Activated naive CD4-positive, alpha-beta T cell treated with anti-CD3 and anti-CD28 coated beads for 36 hours (primary cell): ENCODE measurements at regions of chr9 and their contacts with region 1.

Region 1: DNA sequence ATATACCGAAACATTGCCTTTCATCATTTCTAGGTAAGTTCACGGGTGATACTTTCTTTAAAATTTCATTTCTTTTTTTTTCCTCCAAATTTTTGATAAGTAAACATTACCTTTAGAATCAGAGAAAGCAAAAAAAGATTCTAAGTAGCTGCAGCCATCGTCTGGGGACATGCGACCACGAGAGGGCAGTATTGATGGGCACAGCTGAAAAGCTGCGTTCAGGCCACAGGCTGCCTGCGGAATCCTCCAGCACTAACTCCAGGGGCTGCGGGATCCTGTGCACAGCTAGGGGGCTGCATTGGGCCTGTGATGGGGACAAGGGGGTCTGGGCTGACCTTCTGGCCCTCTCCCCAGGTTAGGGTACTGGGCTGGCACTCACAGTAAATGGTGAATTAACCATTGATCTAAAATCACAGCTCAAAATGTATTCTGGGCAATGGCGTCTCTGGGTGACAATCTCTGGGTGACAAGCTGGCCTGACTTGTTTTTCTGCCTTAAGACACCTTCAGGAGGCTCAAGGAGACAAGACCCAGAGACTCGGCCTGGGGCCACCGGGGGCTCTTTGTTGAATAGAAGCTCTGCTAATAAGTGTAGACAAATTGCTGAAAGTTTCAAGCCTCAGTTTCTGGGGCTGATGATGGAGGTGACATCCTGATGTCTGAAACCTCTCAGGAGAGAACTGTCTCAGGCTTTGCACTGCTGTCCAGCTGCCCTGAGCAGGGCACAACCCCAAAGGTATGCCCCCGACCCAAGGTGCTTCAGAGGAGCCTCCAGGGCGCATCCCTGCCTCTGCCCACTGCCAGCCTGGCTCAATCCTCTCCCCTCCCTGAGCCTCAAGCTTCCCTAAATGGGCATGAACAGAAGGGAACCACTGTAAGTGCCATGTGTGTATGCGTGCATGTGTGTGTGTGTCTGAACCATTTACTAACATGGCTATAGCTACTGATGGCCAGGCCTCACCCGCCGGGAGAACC is 44.3 kb upstream of the SARDH start:
- DNase-seq: peak; percentile 83
- H3K4me3 Mint-ChIP-seq: no peak overlapping the region
- H3K27ac Mint-ChIP-seq: no peak overlapping the region
- H3K4me1 Mint-ChIP-seq: no peaks in the 10 kb centered on the region
- H3K27me3 Mint-ChIP-seq: no peaks in the 10 kb centered on the region

Region 2: DNA sequence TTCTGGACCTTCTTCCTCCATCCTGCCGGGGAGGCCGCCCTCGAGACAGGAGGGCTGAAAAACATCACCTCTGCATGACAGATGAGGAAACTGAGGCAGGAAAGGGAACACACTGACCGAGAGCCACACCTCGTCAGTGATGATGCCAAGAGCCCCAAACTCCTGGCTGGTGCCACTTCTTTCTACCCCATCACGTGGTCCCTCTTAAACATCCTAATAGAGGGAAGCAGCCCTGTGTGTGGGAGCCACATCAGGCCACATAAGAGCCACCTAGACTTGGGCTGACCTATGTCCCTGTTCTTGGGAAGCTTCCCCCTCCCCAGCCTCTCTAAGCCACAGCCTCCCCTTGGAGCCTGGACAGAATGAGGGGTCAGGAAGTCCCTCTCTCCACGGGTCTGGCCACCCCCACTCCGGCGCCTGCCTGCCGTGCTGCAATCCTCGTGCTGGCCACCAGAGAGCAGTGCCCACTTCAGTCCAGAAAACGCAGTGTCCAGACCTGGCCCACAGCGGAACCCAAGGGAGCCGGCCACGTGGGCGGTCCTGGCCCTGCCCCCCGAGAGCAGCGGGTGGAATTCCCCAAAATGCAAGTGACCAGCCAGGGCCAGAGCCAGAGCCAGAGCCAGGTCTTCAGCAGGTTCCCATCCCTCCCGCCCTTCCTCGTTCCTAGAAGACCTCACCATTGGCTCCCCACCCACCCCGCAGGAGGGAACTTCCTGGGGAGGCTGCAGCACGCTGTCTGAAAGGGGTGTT is 10.5 kb after region 1 on chr9:
- CTCF ChIA-PET with region 1: interaction called, 10 read pairs
- intact Hi-C with region 1: no loop called
- DNase-seq: peak; percentile 63
- H3K4me3 Mint-ChIP-seq: no peak overlapping the region
- H3K27ac Mint-ChIP-seq: no peak overlapping the region
- H3K4me1 Mint-ChIP-seq: peaks cover 2% of the 10 kb centered on the region
- H3K27me3 Mint-ChIP-seq: peaks cover 2% of the 10 kb centered on the region

Region 3: GRCh38 chr9:133825555-133826208 is 43.2 kb after region 1 on chr9:
- CTCF ChIA-PET with region 1: no interaction called
- intact Hi-C with region 1: no loop called
- DNase-seq: no peak
- H3K4me3 Mint-ChIP-seq: no peak overlapping the region
- H3K27ac Mint-ChIP-seq: no peak overlapping the region
- H3K4me1 Mint-ChIP-seq: no peaks in the 10 kb centered on the region
- H3K27me3 Mint-ChIP-seq: no peaks in the 10 kb centered on the region

Region 4: GRCh38 chr9:134099123-134099787 is 316.8 kb after region 1 on chr9:
- CTCF ChIA-PET with region 1: no interaction called
- intact Hi-C with region 1: loop called (anchors 1 kb)
- DNase-seq: peak; percentile 70
- H3K4me3 Mint-ChIP-seq: no peak overlapping the region
- H3K27ac Mint-ChIP-seq: no peak overlapping the region
- H3K4me1 Mint-ChIP-seq: no peaks in the 10 kb centered on the region
- H3K27me3 Mint-ChIP-seq: peaks cover 8% of the 10 kb centered on the region